Right cardiac atrium (tissue), 5 donors: ENCODE measurements at regions of chr17 and their contacts with region 1.

Region 1: GRCh38 chr17:21304091-21304490 is 19.6 kb downstream of the MAP2K3 start:
- DNase-seq: peak; percentile 15 to 68 (median 52)
- ATAC-seq: no peak
- H3K4me3 ChIP-seq: no peak overlapping the region
- H3K27ac ChIP-seq: no peak overlapping the region
- H3K4me1 ChIP-seq: no peaks in the 10 kb centered on the region
- H3K27me3 ChIP-seq: no peaks in the 10 kb centered on the region

Region 2: DNA sequence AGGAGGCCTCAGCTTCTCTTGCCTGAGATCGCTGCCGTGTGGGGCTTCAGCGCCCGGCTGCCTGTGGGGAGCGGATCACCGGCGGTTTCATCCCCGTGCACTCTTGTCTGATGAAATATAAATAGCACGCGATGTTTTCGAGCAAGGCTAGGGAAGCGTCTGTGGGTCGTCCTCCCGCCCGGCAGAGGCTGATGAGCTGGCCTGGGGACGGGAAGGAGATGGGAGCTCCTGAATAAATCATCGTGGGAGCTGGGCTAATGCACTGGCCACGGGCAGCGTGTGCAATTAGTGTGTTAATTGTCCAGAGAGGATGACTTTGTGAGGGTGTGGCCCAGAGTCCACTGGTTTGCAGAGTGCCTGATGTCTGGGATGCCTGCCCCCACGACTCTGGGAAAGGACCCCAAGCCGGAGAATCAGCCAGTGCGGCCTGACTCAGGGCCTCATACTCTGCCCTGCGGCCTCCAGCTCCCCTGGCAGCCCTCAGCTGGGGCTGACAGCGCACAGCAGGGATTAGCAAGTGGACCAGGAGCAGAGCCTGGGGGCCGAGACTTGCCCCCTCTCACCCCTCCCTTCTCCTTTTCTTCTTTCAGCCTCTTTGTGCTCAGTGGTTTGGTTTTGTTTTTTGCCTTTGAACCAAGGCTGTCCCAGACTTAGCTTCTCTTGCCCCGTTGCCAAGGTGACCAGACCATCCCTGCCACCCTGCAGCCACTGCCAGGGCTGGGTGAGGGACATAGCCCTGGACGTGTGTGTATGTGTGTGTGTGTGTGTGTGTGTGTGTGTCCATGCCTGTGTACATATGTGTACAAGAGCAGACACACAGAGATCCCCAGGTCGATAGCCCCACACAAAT is 93.5 kb after region 1 on chr17:
- intact Hi-C with region 1: no loop called
- DNase-seq: peak in 1 of 3 donors; percentile 52
- ATAC-seq: no peak
- H3K4me3 ChIP-seq: no peak overlapping the region
- H3K27ac ChIP-seq: peak overlapping the region; percentile 21
- H3K4me1 ChIP-seq: peaks cover 3% of the 10 kb centered on the region
- H3K27me3 ChIP-seq: no peaks in the 10 kb centered on the region

Region 3: GRCh38 chr17:22158364-22158763 is 854.3 kb after region 1 on chr17:
- intact Hi-C with region 1: no loop called
- DNase-seq: no peak
- ATAC-seq: no peak
- H3K4me3 ChIP-seq: no peak overlapping the region
- H3K27ac ChIP-seq: no peak overlapping the region
- H3K4me1 ChIP-seq: no peaks in the 10 kb centered on the region
- H3K27me3 ChIP-seq: no peaks in the 10 kb centered on the region

Region 4: GRCh38 chr17:22217135-22217534 is 913.0 kb after region 1 on chr17:
- intact Hi-C with region 1: loop called in 1 of 4 experiments (anchors 10 kb)
- DNase-seq: no peak
- ATAC-seq: no peak
- H3K4me3 ChIP-seq: no peak overlapping the region
- H3K27ac ChIP-seq: no peak overlapping the region
- H3K4me1 ChIP-seq: no peaks in the 10 kb centered on the region
- H3K27me3 ChIP-seq: no peaks in the 10 kb centered on the region